OCI-LY7 (cell line): ENCODE measurements at regions of chr1 and their contacts with region 1.

Region 1: GRCh38 chr1:31394628-31395193 is 18.3 kb upstream of the SERINC2 start:
- DNase-seq: peak; percentile 82
- H3K4me3 ChIP-seq: peak overlapping the region; percentile 62
- H3K27ac ChIP-seq: no peak overlapping the region
- H3K4me1 ChIP-seq: peaks cover 14% of the 10 kb centered on the region
- CTCF ChIP-seq: peak; percentile 89

Region 2: GRCh38 chr1:31381394-31382287 is 13.1 kb before region 1 on chr1:
- CTCF ChIA-PET with region 1: no interaction called
- POLR2A ChIA-PET with region 1: no interaction called
- intact Hi-C with region 1: no loop called
- DNase-seq: no peak
- H3K4me3 ChIP-seq: no peak overlapping the region
- H3K27ac ChIP-seq: no peak overlapping the region
- H3K4me1 ChIP-seq: no peaks in the 10 kb centered on the region
- CTCF ChIP-seq: no peak

Region 3: DNA sequence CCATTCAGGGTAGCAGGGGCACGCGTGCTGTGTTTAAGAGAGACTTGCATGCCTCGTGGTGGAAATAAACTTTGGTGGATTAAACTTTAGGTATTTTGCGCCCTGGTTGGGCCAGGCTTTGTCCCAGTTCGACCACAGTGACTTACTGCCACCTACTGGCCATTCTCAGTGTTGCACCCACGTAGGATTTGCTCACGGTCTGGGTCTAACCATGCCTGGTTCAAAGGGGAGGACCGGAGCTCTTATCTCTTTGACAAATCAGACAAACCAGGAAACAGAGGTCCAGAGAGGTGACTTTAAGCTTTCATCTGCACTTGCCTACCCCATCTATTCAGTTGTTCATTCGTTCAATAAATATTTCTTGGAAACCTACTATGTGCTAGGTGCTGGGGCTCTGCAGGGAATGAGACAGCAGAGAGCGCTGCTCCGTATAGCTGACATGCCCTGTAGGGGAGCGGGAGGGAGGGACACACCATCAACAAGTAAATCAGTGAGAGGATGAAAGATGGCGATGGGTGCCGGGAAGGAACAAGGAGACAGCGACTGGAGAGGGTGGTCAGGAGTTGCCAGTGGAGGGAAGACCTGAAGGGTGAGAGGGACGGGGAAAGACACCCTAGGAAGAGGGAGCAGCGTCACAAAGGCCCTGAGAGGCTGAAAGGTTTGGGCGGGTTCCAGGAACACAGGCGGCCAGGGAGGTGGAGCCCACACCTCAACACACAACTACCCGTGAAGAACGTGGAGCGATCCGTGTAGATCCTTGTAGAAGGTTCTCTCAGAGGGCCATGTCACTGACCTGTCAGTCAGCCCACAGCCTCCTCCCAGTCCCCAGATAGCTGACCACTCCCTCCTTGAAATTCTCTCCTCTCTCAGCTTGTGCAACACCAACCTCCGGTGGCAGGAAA is 154.4 kb after region 1 on chr1:
- CTCF ChIA-PET with region 1: interaction called, 23 read pairs
- POLR2A ChIA-PET with region 1: no interaction called
- intact Hi-C with region 1: loop called (anchors 1 kb)
- DNase-seq: peak; percentile 87
- H3K4me3 ChIP-seq: peak overlapping the region; percentile 2
- H3K27ac ChIP-seq: no peak overlapping the region
- H3K4me1 ChIP-seq: peaks cover 10% of the 10 kb centered on the region
- CTCF ChIP-seq: peak; percentile 99